ENCODE measurements at regions of chr4 and their contacts with region 1.

Region 1: DNA sequence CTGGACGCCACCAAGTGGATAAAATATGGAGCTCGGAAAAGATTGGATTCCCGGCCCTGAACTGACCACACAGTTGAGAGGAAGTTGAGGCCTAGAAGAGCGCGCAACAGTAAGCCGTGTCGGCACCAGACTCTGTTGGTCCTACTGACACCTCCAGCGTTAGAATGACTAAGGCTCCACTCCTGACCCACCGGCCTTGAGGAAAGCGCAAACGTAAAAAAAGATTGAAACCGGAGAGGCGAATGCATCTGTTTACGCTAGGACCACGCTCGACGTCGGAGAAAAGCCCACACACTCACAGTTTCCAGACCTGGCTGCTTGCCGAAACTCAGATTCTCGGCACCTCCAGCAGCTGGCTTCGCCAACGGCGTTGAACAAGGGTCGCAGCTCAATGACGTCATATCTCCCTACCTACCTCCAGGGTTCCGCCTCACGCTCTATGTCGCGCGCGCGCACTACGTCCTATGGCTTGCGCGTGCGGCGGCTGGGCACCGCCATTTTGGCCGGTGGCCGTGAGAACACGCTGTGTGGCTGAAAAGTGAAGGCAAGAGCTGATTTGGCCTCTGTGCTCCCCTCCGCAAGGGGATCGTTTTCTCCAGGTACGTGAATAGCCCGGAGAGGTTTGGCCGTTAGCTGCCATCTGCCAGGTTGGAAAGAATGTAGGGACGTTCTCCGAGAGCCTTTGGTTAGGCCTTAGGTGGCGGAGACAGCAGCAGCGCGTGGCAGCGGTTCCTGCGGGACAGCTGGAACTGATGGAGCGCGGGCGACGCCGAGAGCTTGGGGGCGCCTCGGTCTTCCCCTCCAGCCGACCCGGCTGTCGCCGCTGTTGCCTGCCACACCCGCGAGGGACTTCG is at the starts of genes ABCE1 and ANAPC10:
- DNase-seq: peak; percentile 90 to 99
- ATAC-seq: peak; percentile 88 to 96 (median 94)
- H3K4me3 ChIP-seq: peak within 1 kb of the TSS; percentile 83
- H3K4me3 Mint-ChIP-seq: peak within 1 kb of the TSS; percentile 92
- H3K27ac ChIP-seq: peak within 1 kb of the TSS; percentile 84
- H3K27ac Mint-ChIP-seq: peak within 1 kb of the TSS; percentile 92 to 95
- H3K4me1 ChIP-seq: peaks cover 19% of the 10 kb centered on the region
- H3K4me1 Mint-ChIP-seq: peaks cover 25 to 43% of the 10 kb centered on the region in 2 donors
- H3K27me3 ChIP-seq: no peaks in the 10 kb centered on the region
- H3K27me3 Mint-ChIP-seq: no peaks in the 10 kb centered on the region
- CTCF ChIP-seq: no peak
- total RNA-seq, gene ABCE1: 25.8 to 33.8 (median 31.7) TPM
- total RNA-seq, gene ANAPC10: 27.9 to 37.7 (median 37.7) TPM

Region 2: DNA sequence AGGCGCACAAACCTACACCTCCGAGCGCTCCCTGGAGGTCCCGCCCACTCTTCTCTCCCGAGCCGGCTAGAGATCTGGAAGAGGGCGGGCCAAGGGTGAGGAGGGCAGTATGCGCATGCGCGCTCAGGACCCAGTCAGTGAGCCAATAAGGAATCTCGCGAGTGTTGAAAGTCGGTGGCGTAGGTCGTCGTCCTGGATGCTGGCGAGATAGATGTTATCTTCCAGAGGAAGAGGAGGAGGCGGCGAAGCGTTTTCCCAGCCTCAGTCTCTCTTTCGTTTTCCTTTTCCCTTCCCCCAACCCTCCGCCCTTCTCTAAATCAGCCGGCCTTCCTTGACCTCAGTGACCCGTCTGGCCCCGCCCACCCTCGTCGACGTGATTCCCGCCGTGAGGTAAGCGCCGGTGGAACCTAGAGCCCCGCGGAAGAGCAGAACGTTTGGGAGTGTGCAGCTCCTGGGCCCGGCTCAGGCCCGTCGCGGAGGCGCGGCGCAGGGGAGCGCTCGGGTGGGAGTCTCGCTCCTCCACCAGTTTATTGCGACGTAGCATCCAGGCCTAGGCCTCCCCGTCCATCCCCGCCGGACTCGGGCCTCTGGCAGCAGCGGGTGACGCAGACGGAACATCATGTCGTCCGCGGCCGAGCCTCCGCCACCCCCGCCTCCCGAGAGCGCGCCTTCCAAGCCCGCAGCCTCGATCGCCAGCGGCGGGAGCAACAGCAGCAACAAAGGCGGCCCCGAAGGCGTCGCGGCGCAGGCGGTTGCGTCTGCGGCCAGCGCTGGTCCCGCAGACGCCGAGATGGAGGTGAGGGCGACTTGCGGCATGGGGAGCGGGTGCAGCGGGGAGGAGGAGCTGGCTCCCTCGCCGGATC is 1584.5 kb before region 1 on chr4 and contains the start of gene SMARCA5:
- intact Hi-C with region 1: loop called (anchors 1 kb)
- DNase-seq: peak; percentile 93 to 100
- ATAC-seq: peak; percentile 82 to 94 (median 83)
- H3K4me3 ChIP-seq: peak within 1 kb of the TSS; percentile 94
- H3K4me3 Mint-ChIP-seq: peak within 1 kb of the TSS; percentile 95
- H3K27ac ChIP-seq: peak within 1 kb of the TSS; percentile 99
- H3K27ac Mint-ChIP-seq: peak within 1 kb of the TSS; percentile 96 to 98
- H3K4me1 ChIP-seq: peaks cover 8% of the 10 kb centered on the region
- H3K4me1 Mint-ChIP-seq: peaks cover 37 to 39% of the 10 kb centered on the region in 2 donors
- H3K27me3 ChIP-seq: no peaks in the 10 kb centered on the region
- H3K27me3 Mint-ChIP-seq: no peaks in the 10 kb centered on the region
- CTCF ChIP-seq: no peak
- total RNA-seq, gene SMARCA5: 42.5 to 53.8 (median 45.8) TPM